ENCODE measurements at regions of chr3 and their contacts with region 1.

Region 1: GRCh38 chr3:60101621-60102020 is 1051.8 kb upstream of the CFAP20DC start:
- DNase-seq: no peak
- H3K4me3 ChIP-seq: no peak overlapping the region
- H3K27ac ChIP-seq: no peak overlapping the region
- H3K4me1 ChIP-seq: no peaks in the 10 kb centered on the region
- H3K27me3 ChIP-seq: no peaks in the 10 kb centered on the region
- CTCF ChIP-seq: no peak
- POLR2A ChIP-seq: no peak

Region 2: GRCh38 chr3:60657972-60658371 is 556.4 kb after region 1 on chr3:
- intact Hi-C with region 1: loop called (anchors 5 kb)
- DNase-seq: no peak
- H3K4me3 ChIP-seq: no peak overlapping the region
- H3K27ac ChIP-seq: no peak overlapping the region
- H3K4me1 ChIP-seq: no peaks in the 10 kb centered on the region
- H3K27me3 ChIP-seq: no peaks in the 10 kb centered on the region
- CTCF ChIP-seq: no peak
- POLR2A ChIP-seq: no peak

Measured in breast epithelium (tissue), 4 donors.